Activated CD8-positive, alpha-beta T cell treated with anti-CD3 and anti-CD28 coated beads, Interleukin-2, amount 10 ng/mL, durations not matched to agents 7 days and 5 days (primary cell): ENCODE measurements at regions of chr3 and their contacts with region 1.

Region 1: DNA sequence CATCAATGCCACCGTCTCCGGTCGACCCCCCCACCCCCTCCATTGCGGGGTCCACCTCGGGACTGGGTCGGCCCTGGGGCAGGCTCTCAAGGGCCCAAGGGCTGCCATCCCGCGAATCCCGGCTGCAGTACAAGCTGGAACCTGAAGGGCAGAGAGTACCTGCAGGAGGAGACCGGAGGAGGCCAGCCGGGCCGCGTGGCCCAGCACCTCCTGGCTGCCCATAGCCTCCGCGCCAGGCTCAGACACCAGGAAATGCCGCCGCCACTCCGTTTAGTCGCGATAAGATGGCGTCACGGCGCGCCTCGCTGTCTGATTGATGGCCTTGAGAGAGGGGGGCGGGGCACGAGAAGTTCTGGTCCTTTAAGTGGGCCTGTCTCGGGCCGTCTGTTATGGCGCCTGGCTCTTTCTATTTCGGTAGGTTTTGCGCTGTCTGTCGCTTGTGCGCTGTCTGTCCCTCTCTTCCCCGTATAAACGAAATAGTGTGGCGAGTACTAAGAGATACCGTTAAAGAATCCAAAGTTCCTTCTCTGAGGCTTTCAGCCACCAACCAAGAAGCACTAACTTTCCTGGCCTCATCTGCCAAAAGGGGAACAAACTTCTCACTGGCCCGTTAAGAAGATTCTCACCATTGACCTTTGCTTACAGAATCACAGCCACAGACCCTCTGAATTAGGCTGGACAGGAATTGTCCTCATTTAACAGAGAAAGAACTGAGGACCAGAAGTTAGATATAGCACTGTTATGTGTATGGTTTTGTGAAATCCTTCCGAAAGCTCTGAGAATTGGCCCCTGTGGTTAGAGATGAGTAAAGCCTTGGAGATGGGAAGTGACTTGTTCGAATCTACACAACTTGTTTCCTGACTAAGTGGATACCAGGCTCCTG is at the start of gene RFT1:
- DNase-seq: peak; percentile 99
- ATAC-seq: peak; percentile 95
- H3K4me3 Mint-ChIP-seq: peak within 1 kb of the TSS; percentile 82
- H3K27ac Mint-ChIP-seq: peak within 1 kb of the TSS; percentile 89
- H3K4me1 Mint-ChIP-seq: peaks cover 26% of the 10 kb centered on the region
- H3K27me3 Mint-ChIP-seq: no peaks in the 10 kb centered on the region
- total RNA-seq, gene RFT1: 31.7 to 32.3 TPM

Region 2: GRCh38 chr3:53150247-53151085 is 20.0 kb after region 1 on chr3:
- CTCF ChIA-PET with region 1: interaction called, 42 read pairs
- POLR2A ChIA-PET with region 1: no interaction called
- DNase-seq: no peak
- ATAC-seq: no peak
- H3K4me3 Mint-ChIP-seq: no peak overlapping the region
- H3K27ac Mint-ChIP-seq: no peak overlapping the region
- H3K4me1 Mint-ChIP-seq: no peaks in the 10 kb centered on the region
- H3K27me3 Mint-ChIP-seq: peaks cover 17% of the 10 kb centered on the region

Region 3: DNA sequence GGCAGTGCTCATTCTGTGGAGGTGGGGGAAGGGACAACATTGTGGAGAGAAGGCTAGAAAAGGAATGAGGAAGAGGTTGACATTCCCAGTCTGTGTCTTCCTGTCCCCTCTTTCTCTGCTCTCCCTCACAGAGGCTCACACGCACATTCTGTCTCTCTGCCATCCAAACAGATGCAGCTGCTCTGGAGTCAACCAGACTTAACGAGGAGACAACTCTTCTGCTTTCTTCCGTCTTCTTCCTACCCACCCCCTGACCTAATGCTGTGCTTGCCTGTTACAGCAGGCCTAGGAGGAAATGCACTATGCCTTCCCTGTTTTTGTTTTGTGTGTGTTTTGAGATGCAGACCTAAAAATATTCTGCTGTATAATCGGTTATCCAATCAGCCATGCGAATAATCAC is 485.9 kb after region 1 on chr3:
- CTCF ChIA-PET with region 1: no interaction called
- POLR2A ChIA-PET with region 1: no interaction called
- DNase-seq: no peak
- ATAC-seq: no peak
- H3K4me3 Mint-ChIP-seq: no peak overlapping the region
- H3K27ac Mint-ChIP-seq: no peak overlapping the region
- H3K4me1 Mint-ChIP-seq: no peaks in the 10 kb centered on the region
- H3K27me3 Mint-ChIP-seq: peaks cover 13% of the 10 kb centered on the region